B cell (primary cell): ENCODE measurements at regions of chrX and their contacts with region 1.

Region 1: GRCh38 chrX:53081925-53082772 is at the start of gene TSPYL2:
- DNase-seq: peak; percentile 95
- ATAC-seq: peak; percentile 88
- H3K4me3 ChIP-seq: peak within 1 kb of the TSS; percentile 61 to 69 (median 65)
- H3K4me3 Mint-ChIP-seq: peak within 1 kb of the TSS; percentile 90
- H3K27ac ChIP-seq: peak within 1 kb of the TSS; percentile 85
- H3K27ac Mint-ChIP-seq: peak within 1 kb of the TSS; percentile 96
- H3K4me1 ChIP-seq: peaks cover 9 to 17% of the 10 kb centered on the region in 2 donors
- H3K4me1 Mint-ChIP-seq: peaks cover 31% of the 10 kb centered on the region
- H3K27me3 ChIP-seq: no peaks in the 10 kb centered on the region
- H3K27me3 Mint-ChIP-seq: no peaks in the 10 kb centered on the region
- CTCF ChIP-seq: no peak
- total RNA-seq, gene TSPYL2: 112 and 126 TPM in 2 replicates

Region 2: DNA sequence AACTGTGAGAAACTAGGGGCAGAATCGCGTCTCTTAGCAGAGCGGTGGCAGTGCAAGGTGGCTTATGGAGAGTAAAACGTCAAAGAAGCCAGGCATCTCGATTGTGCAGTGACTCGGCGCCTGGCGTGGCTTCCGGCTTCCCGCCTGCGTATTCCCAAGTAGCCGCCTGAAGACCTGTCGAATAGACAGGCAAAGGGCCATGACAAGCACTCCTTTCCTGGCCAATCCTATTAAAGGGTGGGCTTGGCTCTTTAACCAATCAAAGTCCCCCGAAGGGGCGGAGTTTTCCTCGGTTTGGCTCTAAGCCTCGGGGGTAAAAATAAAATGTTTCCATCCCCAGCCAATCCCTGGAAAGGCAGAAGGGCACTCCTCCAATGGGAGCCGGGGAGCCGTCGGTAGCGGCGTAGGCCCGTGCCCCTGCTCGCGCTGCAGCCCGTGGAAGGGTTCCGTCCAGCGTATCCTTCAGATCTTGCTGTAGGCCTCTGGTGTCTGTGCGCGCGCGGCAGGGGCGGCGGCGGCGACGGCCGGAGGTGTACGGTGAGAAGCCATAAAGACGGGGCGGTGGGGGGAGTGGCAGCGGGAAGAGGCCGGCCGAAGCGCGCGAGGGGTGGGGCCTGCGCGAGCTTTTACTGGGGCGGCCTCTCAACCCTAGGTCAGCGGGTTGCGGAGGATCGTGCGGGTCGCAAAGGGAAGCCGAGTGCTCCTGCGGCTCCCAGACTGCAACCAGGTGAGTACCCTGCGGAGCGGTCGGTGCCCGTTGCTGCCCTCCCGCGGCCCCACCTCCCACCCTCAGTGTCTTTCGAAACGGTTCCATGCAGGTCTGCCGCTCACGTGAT is 11.8 kb after region 1 on chrX and contains the start of gene KANTR:
- CTCF ChIA-PET with region 1: interaction called, 3 read pairs
- POLR2A ChIA-PET with region 1: interaction called, 6 read pairs
- intact Hi-C with region 1: loop called (anchors 1 kb)
- DNase-seq: peak; percentile 88
- ATAC-seq: peak; percentile 82
- H3K4me3 ChIP-seq: peak within 1 kb of the TSS; percentile 51 to 72 (median 68)
- H3K4me3 Mint-ChIP-seq: peak within 1 kb of the TSS; percentile 91
- H3K27ac ChIP-seq: peak within 1 kb of the TSS; percentile 49 to 59
- H3K27ac Mint-ChIP-seq: peak within 1 kb of the TSS; percentile 91
- H3K4me1 ChIP-seq: peaks cover 6 to 15% of the 10 kb centered on the region in 2 donors
- H3K4me1 Mint-ChIP-seq: peaks cover 16% of the 10 kb centered on the region
- H3K27me3 ChIP-seq: no peaks in the 10 kb centered on the region
- H3K27me3 Mint-ChIP-seq: no peaks in the 10 kb centered on the region
- CTCF ChIP-seq: no peak
- total RNA-seq, gene KANTR: 26.8 and 32.6 TPM in 2 replicates